CD8-positive, alpha-beta T cell (primary cell): ENCODE measurements at regions of chr2 and their contacts with region 1.

Region 1: GRCh38 chr2:169694113-169694903 is at the starts of genes CFAP210 and PHOSPHO2:
- DNase-seq: peak; percentile 98 to 100 (median 99)
- ATAC-seq: peak; percentile 89
- H3K4me3 ChIP-seq: peak within 1 kb of the TSS; percentile 49 to 69
- H3K4me3 Mint-ChIP-seq: peak within 1 kb of the TSS; percentile 95
- H3K27ac ChIP-seq: peak within 1 kb of the TSS; percentile 86 to 93
- H3K27ac Mint-ChIP-seq: peak within 1 kb of the TSS; percentile 99
- H3K4me1 ChIP-seq: peaks cover 11% of the 10 kb centered on the region
- H3K4me1 Mint-ChIP-seq: peaks cover 19% of the 10 kb centered on the region
- H3K27me3 ChIP-seq: no peaks in the 10 kb centered on the region
- H3K27me3 Mint-ChIP-seq: peaks cover 2% of the 10 kb centered on the region
- CTCF ChIP-seq: no peak
- total RNA-seq, gene CFAP210: 0.95 to 1.4 TPM
- total RNA-seq, gene PHOSPHO2: 2.3 TPM

Region 2: GRCh38 chr2:169397697-169398096 is 296.6 kb before region 1 on chr2:
- CTCF ChIA-PET with region 1: no interaction called
- POLR2A ChIA-PET with region 1: no interaction called
- intact Hi-C with region 1: no loop called
- DNase-seq: peak in 2 of 9 experiments; percentile 6 to 8
- ATAC-seq: no peak
- H3K4me3 ChIP-seq: no peak overlapping the region
- H3K4me3 Mint-ChIP-seq: no peak overlapping the region
- H3K27ac ChIP-seq: no peak overlapping the region
- H3K27ac Mint-ChIP-seq: no peak overlapping the region
- H3K4me1 ChIP-seq: no peaks in the 10 kb centered on the region
- H3K4me1 Mint-ChIP-seq: no peaks in the 10 kb centered on the region
- H3K27me3 ChIP-seq: no peaks in the 10 kb centered on the region
- H3K27me3 Mint-ChIP-seq: peaks cover 20% of the 10 kb centered on the region
- CTCF ChIP-seq: no peak

Region 3: DNA sequence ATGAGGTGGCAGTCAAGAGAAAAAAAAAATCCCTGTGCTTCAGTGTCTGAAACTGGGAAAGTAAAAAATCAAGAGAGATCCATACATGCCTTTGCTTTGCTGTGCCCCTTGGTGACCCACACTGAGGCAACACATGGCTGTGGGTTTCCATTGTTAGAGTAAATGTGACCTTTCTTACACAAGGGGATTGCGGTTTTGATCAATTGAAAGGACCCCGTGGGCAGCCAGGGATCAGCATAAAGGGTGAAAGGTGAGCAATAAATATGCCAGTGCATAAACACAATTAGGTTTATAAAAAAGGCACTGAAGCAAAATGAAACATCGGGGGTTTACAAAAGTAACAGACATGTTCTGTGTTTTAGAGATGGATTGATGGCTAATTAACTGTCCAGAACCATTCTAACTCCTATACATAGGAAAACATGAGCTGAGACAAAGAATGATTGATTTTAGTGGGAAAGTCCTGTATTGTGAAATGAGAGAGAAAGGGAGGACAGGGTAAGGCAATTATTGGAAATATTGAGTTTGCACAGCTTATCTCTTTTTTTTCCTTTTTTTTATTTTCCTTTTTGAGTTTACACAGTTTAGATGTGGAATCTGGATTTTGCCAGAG is 255.7 kb before region 1 on chr2:
- CTCF ChIA-PET with region 1: no interaction called
- POLR2A ChIA-PET with region 1: no interaction called
- intact Hi-C with region 1: no loop called
- DNase-seq: no peak
- ATAC-seq: no peak
- H3K4me3 ChIP-seq: no peak overlapping the region
- H3K4me3 Mint-ChIP-seq: no peak overlapping the region
- H3K27ac ChIP-seq: no peak overlapping the region
- H3K27ac Mint-ChIP-seq: no peak overlapping the region
- H3K4me1 ChIP-seq: no peaks in the 10 kb centered on the region
- H3K4me1 Mint-ChIP-seq: no peaks in the 10 kb centered on the region
- H3K27me3 ChIP-seq: no peaks in the 10 kb centered on the region
- H3K27me3 Mint-ChIP-seq: peaks cover 33% of the 10 kb centered on the region
- CTCF ChIP-seq: no peak

Region 4: GRCh38 chr2:169528271-169528701 is 166.0 kb before region 1 on chr2:
- CTCF ChIA-PET with region 1: no interaction called
- POLR2A ChIA-PET with region 1: no interaction called
- intact Hi-C with region 1: no loop called
- DNase-seq: peak; percentile 50 to 82 (median 76)
- ATAC-seq: peak; percentile 89
- H3K4me3 ChIP-seq: no peak overlapping the region
- H3K4me3 Mint-ChIP-seq: no peak overlapping the region
- H3K27ac ChIP-seq: no peak overlapping the region
- H3K27ac Mint-ChIP-seq: no peak overlapping the region
- H3K4me1 ChIP-seq: no peaks in the 10 kb centered on the region
- H3K4me1 Mint-ChIP-seq: no peaks in the 10 kb centered on the region
- H3K27me3 ChIP-seq: no peaks in the 10 kb centered on the region
- H3K27me3 Mint-ChIP-seq: no peaks in the 10 kb centered on the region
- CTCF ChIP-seq: peak; percentile 88

Region 5: GRCh38 chr2:169573160-169573973 is 120.9 kb before region 1 on chr2 and contains the start of gene FASTKD1:
- CTCF ChIA-PET with region 1: no interaction called
- POLR2A ChIA-PET with region 1: no interaction called
- intact Hi-C with region 1: loop called (anchors 1 to 2 kb)
- DNase-seq: peak; percentile 58 to 94 (median 84)
- ATAC-seq: peak; percentile 100
- H3K4me3 ChIP-seq: peak within 1 kb of the TSS; percentile 91 to 92
- H3K4me3 Mint-ChIP-seq: peak within 1 kb of the TSS; percentile 95
- H3K27ac ChIP-seq: peak within 1 kb of the TSS; percentile 55 to 81
- H3K27ac Mint-ChIP-seq: peak within 1 kb of the TSS; percentile 90
- H3K4me1 ChIP-seq: peaks cover 6% of the 10 kb centered on the region
- H3K4me1 Mint-ChIP-seq: peaks cover 28% of the 10 kb centered on the region
- H3K27me3 ChIP-seq: no peaks in the 10 kb centered on the region
- H3K27me3 Mint-ChIP-seq: no peaks in the 10 kb centered on the region
- CTCF ChIP-seq: no peak
- total RNA-seq, gene FASTKD1: 5.1 to 6.1 TPM

Region 6: GRCh38 chr2:169619946-169620345 is 74.4 kb before region 1 on chr2:
- CTCF ChIA-PET with region 1: no interaction called
- POLR2A ChIA-PET with region 1: no interaction called
- intact Hi-C with region 1: loop called in 1 of 2 experiments (anchors 5 kb)
- DNase-seq: no peak
- ATAC-seq: no peak
- H3K4me3 ChIP-seq: no peak overlapping the region
- H3K4me3 Mint-ChIP-seq: no peak overlapping the region
- H3K27ac ChIP-seq: no peak overlapping the region
- H3K27ac Mint-ChIP-seq: no peak overlapping the region
- H3K4me1 ChIP-seq: no peaks in the 10 kb centered on the region
- H3K4me1 Mint-ChIP-seq: peaks cover 42% of the 10 kb centered on the region
- H3K27me3 ChIP-seq: no peaks in the 10 kb centered on the region
- H3K27me3 Mint-ChIP-seq: no peaks in the 10 kb centered on the region
- CTCF ChIP-seq: no peak

Region 7: DNA sequence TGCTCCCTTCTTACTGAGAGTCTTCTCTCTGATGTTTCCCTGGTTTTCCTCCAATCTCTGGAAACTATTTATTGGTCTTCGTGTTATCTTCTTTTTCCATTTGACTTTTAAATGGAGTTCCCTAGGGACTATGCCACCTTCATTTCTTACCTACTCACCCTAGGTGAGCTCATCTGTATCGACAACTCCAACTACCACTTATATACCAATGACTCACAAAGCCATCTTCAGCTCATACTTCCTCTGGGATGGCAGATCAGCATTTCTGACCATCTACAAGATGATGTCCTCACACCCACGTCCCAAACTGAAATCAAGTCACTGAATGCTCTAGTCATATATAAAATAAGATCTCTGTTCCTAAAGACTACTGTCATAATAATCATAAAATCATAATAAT is 40.7 kb before region 1 on chr2:
- CTCF ChIA-PET with region 1: no interaction called
- POLR2A ChIA-PET with region 1: no interaction called
- intact Hi-C with region 1: no loop called
- DNase-seq: no peak
- ATAC-seq: no peak
- H3K4me3 ChIP-seq: no peak overlapping the region
- H3K4me3 Mint-ChIP-seq: no peak overlapping the region
- H3K27ac ChIP-seq: no peak overlapping the region
- H3K27ac Mint-ChIP-seq: no peak overlapping the region
- H3K4me1 ChIP-seq: no peaks in the 10 kb centered on the region
- H3K4me1 Mint-ChIP-seq: no peaks in the 10 kb centered on the region
- H3K27me3 ChIP-seq: peaks cover 3 to 6% of the 10 kb centered on the region in 2 experiments
- H3K27me3 Mint-ChIP-seq: peaks cover 17% of the 10 kb centered on the region
- CTCF ChIP-seq: no peak

Region 8: DNA sequence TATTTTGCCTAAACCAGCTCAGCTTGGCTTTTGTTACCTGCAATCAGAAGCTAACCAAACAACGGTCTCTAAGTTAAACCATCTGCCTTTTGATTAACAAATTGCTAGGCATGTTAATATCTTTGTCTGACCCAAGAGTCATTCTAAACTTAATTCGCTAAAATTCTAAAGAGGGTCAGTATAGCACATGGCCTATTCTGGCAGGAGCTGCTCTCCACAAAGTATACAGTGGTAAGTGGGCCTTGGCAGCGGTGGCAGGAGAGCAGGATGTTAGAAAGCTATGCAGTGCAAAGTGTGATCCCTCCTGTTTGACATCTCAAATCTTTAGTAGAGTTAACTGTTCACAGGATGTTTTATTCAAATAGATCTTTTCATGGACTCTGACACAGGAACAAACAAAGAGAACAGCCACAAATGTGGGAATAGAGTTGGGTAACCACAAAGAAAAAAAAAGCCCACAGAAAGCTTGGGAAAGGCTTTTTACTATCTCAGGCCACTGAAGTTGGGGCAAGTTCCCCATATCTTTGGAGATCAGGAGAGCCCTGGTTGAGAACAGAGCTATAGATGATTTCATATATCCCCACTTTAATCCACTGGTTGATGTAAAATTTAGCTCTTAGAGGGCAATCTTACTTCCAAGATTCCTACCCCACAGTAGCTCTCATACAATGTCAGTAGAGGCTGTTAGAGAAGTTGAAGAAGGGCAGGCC is 10.7 kb before region 1 on chr2:
- CTCF ChIA-PET with region 1: interaction called, 10 read pairs
- POLR2A ChIA-PET with region 1: no interaction called
- intact Hi-C with region 1: no loop called
- DNase-seq: peak in 2 of 9 experiments; percentile 24 to 42
- ATAC-seq: peak; percentile 20
- H3K4me3 ChIP-seq: no peak overlapping the region
- H3K4me3 Mint-ChIP-seq: peak overlapping the region; percentile 27
- H3K27ac ChIP-seq: peak overlapping the region in 1 of 2 experiments; percentile 74
- H3K27ac Mint-ChIP-seq: peak overlapping the region; percentile 25
- H3K4me1 ChIP-seq: no peaks in the 10 kb centered on the region
- H3K4me1 Mint-ChIP-seq: peaks cover 6% of the 10 kb centered on the region
- H3K27me3 ChIP-seq: no peaks in the 10 kb centered on the region
- H3K27me3 Mint-ChIP-seq: no peaks in the 10 kb centered on the region
- CTCF ChIP-seq: no peak

Region 9: DNA sequence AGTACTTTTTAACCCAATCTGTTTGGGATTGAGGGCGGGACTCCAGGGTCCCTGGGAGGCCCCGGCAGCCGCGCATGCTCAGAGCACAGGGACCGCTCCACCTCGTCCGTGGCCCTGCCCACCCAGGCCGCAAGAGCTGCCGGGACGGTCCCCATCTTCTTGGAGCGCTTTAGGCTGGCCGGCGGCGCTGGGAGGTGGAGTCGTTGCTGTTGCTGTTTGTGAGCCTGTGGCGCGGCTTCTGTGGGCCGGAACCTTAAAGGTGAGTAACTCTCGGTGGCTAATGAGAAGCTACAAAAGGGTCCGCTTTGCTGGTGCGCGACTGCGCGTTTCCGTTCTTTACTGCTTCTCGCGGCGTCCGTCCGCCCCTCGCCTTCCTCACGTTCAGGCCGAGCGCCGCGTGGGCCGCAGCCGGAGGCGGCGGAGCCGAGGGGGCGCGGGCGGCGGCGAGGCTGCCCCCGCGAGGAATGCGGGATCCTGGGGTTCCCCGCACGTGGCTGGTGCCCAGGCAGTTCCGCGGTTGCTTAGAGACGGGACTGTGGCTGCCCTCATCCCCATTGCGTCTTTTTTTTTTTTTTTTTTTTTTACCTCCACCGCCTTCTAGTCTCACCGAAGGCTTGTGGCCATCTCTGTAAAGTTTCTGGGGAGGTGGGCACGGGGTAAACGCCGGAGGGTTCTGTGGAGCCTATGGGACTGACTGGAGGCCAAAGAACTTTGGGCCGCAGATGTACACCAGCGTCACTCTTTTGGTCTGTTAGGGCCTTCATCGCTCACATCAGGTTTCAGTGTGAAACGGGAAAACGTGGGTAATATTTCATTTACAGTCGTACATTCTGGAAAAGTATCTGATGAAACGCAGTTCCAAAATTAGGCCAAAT is 104.6 kb after region 1 on chr2 and contains the start of gene SSB:
- CTCF ChIA-PET with region 1: no interaction called
- POLR2A ChIA-PET with region 1: interaction called, 4 read pairs
- intact Hi-C with region 1: loop called (anchors 1 to 2 kb)
- DNase-seq: peak; percentile 83 to 97 (median 93)
- ATAC-seq: peak; percentile 92
- H3K4me3 ChIP-seq: peak within 1 kb of the TSS; percentile 55 to 80
- H3K4me3 Mint-ChIP-seq: peak within 1 kb of the TSS; percentile 80
- H3K27ac ChIP-seq: peak within 1 kb of the TSS; percentile 86 to 89
- H3K27ac Mint-ChIP-seq: peak within 1 kb of the TSS; percentile 87
- H3K4me1 ChIP-seq: peaks cover 20% of the 10 kb centered on the region
- H3K4me1 Mint-ChIP-seq: peaks cover 29% of the 10 kb centered on the region
- H3K27me3 ChIP-seq: no peaks in the 10 kb centered on the region
- H3K27me3 Mint-ChIP-seq: no peaks in the 10 kb centered on the region
- CTCF ChIP-seq: no peak
- total RNA-seq, gene SSB: 150 to 170 TPM

Region 10: DNA sequence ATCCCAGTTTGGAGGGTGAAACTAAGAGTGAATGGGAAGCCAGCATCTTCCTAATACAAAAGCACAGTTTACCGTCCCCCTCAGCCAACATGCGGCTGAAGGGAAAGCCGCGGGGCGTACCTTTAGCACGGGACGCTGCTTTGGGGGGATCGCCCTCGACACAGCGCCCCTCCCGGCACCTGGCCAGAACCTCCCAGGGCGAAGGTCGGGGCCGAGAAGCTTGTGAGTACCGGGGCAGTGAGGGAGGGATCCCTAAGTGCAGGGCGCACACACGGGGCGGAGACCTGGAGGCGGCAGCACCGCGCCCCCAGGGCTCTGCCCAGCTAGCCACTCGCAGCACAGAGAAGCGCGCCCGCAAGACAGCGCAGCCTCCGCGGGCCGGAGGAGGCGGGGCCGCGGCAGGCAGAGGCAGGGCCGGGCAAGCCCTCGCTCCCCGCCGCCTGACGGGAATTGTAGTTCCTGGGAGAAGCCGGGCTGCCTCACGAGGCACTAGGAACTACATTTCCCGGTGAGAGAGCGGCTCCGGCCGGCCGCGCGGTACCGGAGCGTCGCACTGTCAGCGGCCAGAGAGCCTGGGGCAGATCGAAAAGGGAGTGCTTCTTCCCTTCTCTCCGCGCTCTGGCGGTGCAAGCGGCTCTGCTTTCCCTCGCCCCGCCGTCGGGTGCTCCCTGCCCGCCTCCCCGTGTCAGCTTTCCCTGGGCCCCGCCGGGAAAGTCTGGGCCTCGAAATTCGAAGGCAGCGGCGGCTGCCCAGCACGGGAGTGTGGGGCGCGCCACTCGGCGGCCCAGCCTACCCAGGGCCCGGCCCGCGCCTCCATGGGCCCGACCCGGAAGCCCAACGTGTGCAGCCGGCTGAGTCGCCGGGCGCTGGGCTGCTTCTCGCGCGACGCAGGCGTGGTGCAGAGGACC is 1739.7 kb after region 1 on chr2 and contains the starts of genes DCAF17 and METTL8:
- CTCF ChIA-PET with region 1: no interaction called
- POLR2A ChIA-PET with region 1: no interaction called
- intact Hi-C with region 1: loop called (anchors 5 kb)
- DNase-seq: peak; percentile 84 to 97 (median 93)
- ATAC-seq: peak; percentile 91
- H3K4me3 ChIP-seq: peak within 1 kb of the TSS; percentile 79 to 93
- H3K4me3 Mint-ChIP-seq: peak within 1 kb of the TSS; percentile 91
- H3K27ac ChIP-seq: peak within 1 kb of the TSS; percentile 80 to 97
- H3K27ac Mint-ChIP-seq: peak within 1 kb of the TSS; percentile 96
- H3K4me1 ChIP-seq: peaks cover 12% of the 10 kb centered on the region
- H3K4me1 Mint-ChIP-seq: peaks cover 47% of the 10 kb centered on the region
- H3K27me3 ChIP-seq: no peaks in the 10 kb centered on the region
- H3K27me3 Mint-ChIP-seq: no peaks in the 10 kb centered on the region
- CTCF ChIP-seq: peak; percentile 12
- total RNA-seq, gene DCAF17: 12.5 to 12.9 TPM
- total RNA-seq, gene METTL8: 6.2 to 7.7 TPM